Dorsolateral prefrontal cortex (tissue), 120 donors: ENCODE measurements at regions of chr3 and their contacts with region 1.

Region 1: DNA sequence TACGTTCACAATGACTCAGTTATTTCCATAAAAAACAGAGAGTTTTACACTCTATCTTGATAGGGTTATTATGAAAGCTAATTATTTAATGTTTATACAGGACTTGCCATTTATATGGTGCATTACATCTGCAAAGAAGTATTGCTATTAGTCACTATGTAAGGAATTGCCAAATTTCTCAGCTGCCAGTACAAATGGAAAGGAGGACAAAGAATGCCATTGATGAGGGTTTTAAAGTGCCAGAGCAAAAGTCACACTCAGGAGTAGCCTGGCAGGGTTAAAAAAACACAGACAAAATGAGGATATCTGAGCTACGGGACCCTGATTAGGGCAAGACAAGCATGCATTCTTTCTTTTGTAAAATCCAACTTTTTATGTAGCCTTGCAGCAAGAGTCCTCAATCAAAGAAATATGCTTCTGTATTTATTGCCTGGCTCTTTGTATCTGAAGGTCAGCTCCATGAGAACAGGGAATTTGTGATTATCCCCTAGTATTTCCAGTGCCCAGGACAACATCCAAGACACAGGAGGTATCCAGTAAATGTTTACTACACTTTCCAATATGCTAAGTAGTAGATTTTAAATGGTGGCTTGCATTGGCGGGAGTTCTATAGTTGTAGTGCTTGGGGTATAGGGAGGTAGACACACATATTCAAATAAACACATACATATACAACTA is 1013.6 kb downstream of the ROBO1 start:
- DNase-seq: no peak
- H3K4me3 ChIP-seq: peak overlapping the region in 31 of 59 donors; percentile 0 to 46 (median 21)
- H3K27ac ChIP-seq: peak overlapping the region in 58 of 59 donors; percentile 48 to 96 (median 86)
- H3K27me3 ChIP-seq: no peaks in the 10 kb centered on the region
- CTCF ChIP-seq: peak in 1 of 56 donors; percentile 25

Region 2: DNA sequence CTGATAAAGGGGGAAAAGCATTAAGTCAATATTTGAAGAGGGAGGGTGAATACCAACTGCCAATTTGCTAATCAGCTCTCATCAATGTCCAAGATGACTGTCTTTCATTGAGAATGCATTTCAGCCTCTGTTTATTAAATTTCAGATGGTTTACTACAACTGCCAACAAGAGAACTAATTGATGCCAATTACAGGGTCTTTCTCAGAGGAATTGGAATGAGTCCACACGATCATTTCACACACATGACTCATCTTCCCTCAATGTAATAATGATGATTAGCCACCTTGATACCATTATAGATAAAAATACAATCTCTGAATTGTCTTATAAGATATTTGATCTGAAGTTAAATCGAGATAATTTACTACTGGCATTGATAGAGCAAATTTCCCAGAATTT is 439.9 kb before region 1 on chr3:
- intact Hi-C with region 1: no loop called
- DNase-seq: no peak
- H3K4me3 ChIP-seq: no peak overlapping the region
- H3K27ac ChIP-seq: no peak overlapping the region
- H3K27me3 ChIP-seq: no peaks in the 10 kb centered on the region
- CTCF ChIP-seq: no peak

Region 3: GRCh38 chr3:78809966-78810365 is 55.8 kb after region 1 on chr3:
- intact Hi-C with region 1: no loop called
- DNase-seq: no peak
- H3K4me3 ChIP-seq: no peak overlapping the region
- H3K27ac ChIP-seq: peak overlapping the region in 10 of 59 donors; percentile 12 to 54 (median 28)
- H3K27me3 ChIP-seq: no peaks in the 10 kb centered on the region
- CTCF ChIP-seq: no peak

Region 4: GRCh38 chr3:78887547-78888011 is 133.4 kb after region 1 on chr3:
- intact Hi-C with region 1: loop called in 1 of 2 experiments (anchors 10 kb)
- DNase-seq: no peak
- H3K4me3 ChIP-seq: peak overlapping the region in 17 of 59 donors; percentile 1 to 47 (median 17)
- H3K27ac ChIP-seq: peak overlapping the region in 20 of 59 donors; percentile 0 to 73 (median 38)
- H3K27me3 ChIP-seq: no peaks in the 10 kb centered on the region
- CTCF ChIP-seq: no peak

Region 5: GRCh38 chr3:79111375-79112052 is 357.3 kb after region 1 on chr3:
- intact Hi-C with region 1: no loop called
- DNase-seq: no peak
- H3K4me3 ChIP-seq: no peak overlapping the region
- H3K27ac ChIP-seq: no peak overlapping the region
- H3K27me3 ChIP-seq: no peaks in the 10 kb centered on the region
- CTCF ChIP-seq: no peak